GM12878 (cell line): ENCODE measurements at regions of chr6 and their contacts with region 1.

Region 1: GRCh38 chr6:15148356-15148946 is 97.4 kb upstream of the JARID2 start:
- DNase-seq: no peak
- ATAC-seq: peak; percentile 75
- H3K4me3 ChIP-seq: no peak overlapping the region
- H3K27ac ChIP-seq: no peak overlapping the region
- H3K4me1 ChIP-seq: peaks cover 14% of the 10 kb centered on the region
- H3K27me3 ChIP-seq: no peaks in the 10 kb centered on the region
- CTCF ChIP-seq: no peak
- EP300 ChIP-seq: no peak; a peak in 1 of 4 replicates
- POLR2A ChIP-seq: no peak
- RAD21 ChIP-seq: no peak

Region 2: GRCh38 chr6:14734416-14735340 is 413.8 kb before region 1 on chr6:
- CTCF ChIA-PET with region 1: no interaction called
- POLR2A ChIA-PET with region 1: no interaction called
- RAD21 ChIA-PET with region 1: no interaction called
- SMC1A ChIA-PET with region 1: no interaction called
- in situ Hi-C with region 1: no loop called
- intact Hi-C with region 1: loop called (anchors 10 kb)
- DNase-seq: peak; percentile 88
- ATAC-seq: peak; percentile 92
- H3K4me3 ChIP-seq: no peak overlapping the region
- H3K27ac ChIP-seq: peak overlapping the region; percentile 76
- H3K4me1 ChIP-seq: peaks cover 41% of the 10 kb centered on the region
- H3K27me3 ChIP-seq: no peaks in the 10 kb centered on the region
- CTCF ChIP-seq: no peak
- EP300 ChIP-seq: peak; percentile 94
- POLR2A ChIP-seq: no peak
- RAD21 ChIP-seq: peak; percentile 4; the same call in 1 of the 2 replicates

Region 3: GRCh38 chr6:14921170-14921569 is 227.3 kb before region 1 on chr6:
- CTCF ChIA-PET with region 1: no interaction called
- POLR2A ChIA-PET with region 1: no interaction called
- RAD21 ChIA-PET with region 1: no interaction called
- SMC1A ChIA-PET with region 1: no interaction called
- in situ Hi-C with region 1: no loop called
- intact Hi-C with region 1: no loop called
- DNase-seq: no peak
- ATAC-seq: no peak
- H3K4me3 ChIP-seq: no peak overlapping the region
- H3K27ac ChIP-seq: no peak overlapping the region
- H3K4me1 ChIP-seq: no peaks in the 10 kb centered on the region; the same call in 1 of the 2 replicates
- H3K27me3 ChIP-seq: no peaks in the 10 kb centered on the region; a peak in 1 of 4 replicates
- CTCF ChIP-seq: no peak
- EP300 ChIP-seq: no peak
- POLR2A ChIP-seq: no peak
- RAD21 ChIP-seq: no peak

Region 4: DNA sequence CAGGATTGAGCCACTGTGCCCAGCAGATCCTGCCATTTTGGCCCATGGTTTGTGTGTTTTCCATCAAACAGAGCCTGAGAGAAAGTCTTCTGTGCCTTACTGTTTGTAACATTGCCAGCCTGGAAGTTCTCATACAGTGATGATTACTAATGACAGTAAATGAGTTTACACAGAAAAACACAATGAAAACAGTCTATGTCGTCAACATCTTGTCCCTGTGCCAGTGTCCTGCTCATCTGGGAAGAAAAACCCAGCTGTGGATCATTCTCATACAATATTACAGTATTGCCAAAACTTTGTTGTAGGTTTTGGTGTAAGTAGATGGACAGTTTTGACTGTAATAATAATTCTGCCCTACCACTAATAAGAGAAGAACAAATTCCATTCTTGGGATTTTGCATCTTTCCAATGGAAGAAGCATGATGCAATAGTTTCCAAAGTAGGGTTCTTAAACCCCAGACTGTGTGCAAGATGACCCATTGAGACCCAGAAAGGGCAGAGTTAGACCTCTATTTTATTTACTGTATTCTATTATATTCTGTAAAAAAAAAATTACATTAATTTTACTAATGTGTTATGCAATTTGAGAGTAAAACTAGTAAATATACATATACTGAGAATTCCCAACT is 37.6 kb before region 1 on chr6:
- CTCF ChIA-PET with region 1: no interaction called
- POLR2A ChIA-PET with region 1: no interaction called
- RAD21 ChIA-PET with region 1: no interaction called
- SMC1A ChIA-PET with region 1: no interaction called
- in situ Hi-C with region 1: no loop called
- intact Hi-C with region 1: no loop called
- DNase-seq: no peak
- ATAC-seq: no peak
- H3K4me3 ChIP-seq: no peak overlapping the region
- H3K27ac ChIP-seq: no peak overlapping the region
- H3K4me1 ChIP-seq: no peaks in the 10 kb centered on the region
- H3K27me3 ChIP-seq: no peaks in the 10 kb centered on the region
- CTCF ChIP-seq: no peak
- EP300 ChIP-seq: no peak
- POLR2A ChIP-seq: no peak
- RAD21 ChIP-seq: no peak